OCI-LY7 (cell line): ENCODE measurements at regions of chr21 and their contacts with region 1.

Region 1: GRCh38 chr21:15992171-15992570 is 262.4 kb downstream of the USP25 start:
- DNase-seq: no peak
- H3K4me3 ChIP-seq: no peak overlapping the region
- H3K27ac ChIP-seq: no peak overlapping the region
- H3K4me1 ChIP-seq: no peaks in the 10 kb centered on the region
- CTCF ChIP-seq: no peak

Region 2: GRCh38 chr21:15976807-15977206 is 15.4 kb before region 1 on chr21:
- CTCF ChIA-PET with region 1: no interaction called
- POLR2A ChIA-PET with region 1: no interaction called
- intact Hi-C with region 1: loop called (anchors 1 kb)
- DNase-seq: peak; percentile 1
- H3K4me3 ChIP-seq: no peak overlapping the region
- H3K27ac ChIP-seq: no peak overlapping the region
- H3K4me1 ChIP-seq: no peaks in the 10 kb centered on the region
- CTCF ChIP-seq: peak; percentile 68